ENCODE measurements at regions of chr5 and their contacts with region 1.

Region 1: DNA sequence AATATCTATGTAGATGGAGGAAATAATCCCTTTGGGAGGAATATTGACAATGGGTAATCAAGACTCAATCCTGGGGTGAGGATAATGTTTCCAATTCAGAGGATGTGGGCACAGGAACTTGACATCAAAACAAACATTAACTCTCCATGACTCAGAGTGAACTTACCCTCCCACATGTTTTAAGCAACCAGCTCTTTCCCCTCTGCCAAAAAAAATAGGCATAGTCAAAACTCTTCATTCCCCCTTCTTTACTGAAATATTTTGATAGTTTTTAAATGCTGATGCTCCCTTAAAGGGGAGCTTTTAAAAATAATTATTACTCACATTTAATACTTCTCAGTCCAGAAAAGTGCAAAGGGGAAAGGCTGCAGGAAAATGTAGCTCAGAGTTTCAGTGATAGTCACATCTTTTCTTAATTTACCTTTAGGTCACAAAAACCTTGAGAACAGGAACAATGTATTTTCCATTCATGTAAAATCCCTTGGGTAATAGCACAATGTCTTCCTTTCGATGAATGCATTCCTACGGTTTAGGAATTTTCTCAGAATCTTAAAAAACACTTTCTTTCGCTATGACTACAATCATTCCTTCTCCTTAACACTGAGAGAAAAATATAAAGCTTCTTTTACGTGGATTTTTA is 298.4 kb upstream of the GRAMD2B start:
- DNase-seq: peak; percentile 67
- H3K4me3 ChIP-seq: peak overlapping the region in 1 of 3 experiments; percentile 7
- H3K27ac ChIP-seq: peak overlapping the region; percentile 57
- H3K4me1 ChIP-seq: peaks cover 27% of the 10 kb centered on the region
- H3K27me3 ChIP-seq: no peaks in the 10 kb centered on the region
- CTCF ChIP-seq: no peak

Region 2: DNA sequence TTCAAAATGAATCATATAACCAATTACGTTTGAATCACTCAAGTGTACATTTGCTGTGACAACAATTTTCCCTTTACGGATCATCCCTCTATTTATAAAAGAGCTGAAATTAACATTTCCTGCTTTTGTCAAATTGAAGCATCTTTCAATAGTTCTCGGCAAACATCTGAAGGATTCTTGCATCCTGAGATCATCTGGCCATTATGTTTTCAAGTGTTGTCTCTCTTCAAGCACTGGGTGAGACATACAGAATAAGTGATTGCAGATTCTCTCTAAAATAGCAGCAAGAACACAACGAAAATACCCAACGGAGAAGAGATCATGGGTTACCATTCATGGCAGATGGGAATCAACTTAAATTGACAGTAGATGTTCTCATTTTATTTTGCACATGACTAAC is 14.9 kb after region 1 on chr5:
- CTCF ChIA-PET with region 1: no interaction called
- dilution Hi-C with region 1: no loop called
- in situ Hi-C with region 1: no loop called
- intact Hi-C with region 1: loop called (anchors 1 kb)
- DNase-seq: no peak
- H3K4me3 ChIP-seq: no peak overlapping the region
- H3K27ac ChIP-seq: no peak overlapping the region
- H3K4me1 ChIP-seq: peaks cover 9% of the 10 kb centered on the region
- H3K27me3 ChIP-seq: no peaks in the 10 kb centered on the region
- CTCF ChIP-seq: no peak